Endothelial cell of umbilical vein (primary cell): ENCODE measurements at regions of chr18 and their contacts with region 1.

Region 1: GRCh38 chr18:79378542-79379250 is 17.0 kb upstream of the NFATC1 start:
- DNase-seq: peak; percentile 74
- H3K4me3 ChIP-seq: no peak overlapping the region
- H3K27ac ChIP-seq: no peak overlapping the region
- H3K4me1 ChIP-seq: no peaks in the 10 kb centered on the region
- H3K27me3 ChIP-seq: no peaks in the 10 kb centered on the region
- CTCF ChIP-seq: peak; percentile 99
- POLR2A ChIP-seq: no peak

Region 2: DNA sequence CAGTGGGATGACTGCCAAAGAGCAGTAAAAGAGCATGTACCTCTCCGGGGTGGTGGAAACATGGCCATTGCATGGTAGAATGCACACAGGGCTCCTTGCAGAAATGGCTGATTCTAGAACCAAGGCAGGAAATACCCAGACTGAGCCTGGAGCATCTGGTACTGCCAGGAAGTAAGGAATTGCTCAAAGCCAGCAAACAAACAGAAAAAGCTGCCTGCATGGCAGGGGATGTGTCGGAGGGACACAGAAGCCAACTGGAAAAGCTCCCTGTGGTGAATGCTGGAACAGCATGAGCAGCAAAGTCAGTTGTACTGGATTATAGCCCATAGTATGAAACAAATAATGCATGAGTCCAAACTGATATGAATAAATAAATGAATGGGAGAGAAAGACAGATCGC is 61.0 kb before region 1 on chr18:
- CTCF ChIA-PET with region 1: no interaction called
- POLR2A ChIA-PET with region 1: no interaction called
- dilution Hi-C with region 1: no loop called
- intact Hi-C with region 1: no loop called
- DNase-seq: no peak
- H3K4me3 ChIP-seq: no peak overlapping the region
- H3K27ac ChIP-seq: no peak overlapping the region
- H3K4me1 ChIP-seq: no peaks in the 10 kb centered on the region
- H3K27me3 ChIP-seq: no peaks in the 10 kb centered on the region
- CTCF ChIP-seq: no peak
- POLR2A ChIP-seq: no peak

Region 3: GRCh38 chr18:79393635-79394533 is 15.2 kb after region 1 on chr18:
- CTCF ChIA-PET with region 1: interaction called, 62 read pairs
- POLR2A ChIA-PET with region 1: no interaction called
- dilution Hi-C with region 1: no loop called
- intact Hi-C with region 1: no loop called
- DNase-seq: peak; percentile 94
- H3K4me3 ChIP-seq: peak overlapping the region; percentile 28 to 38 (median 35)
- H3K27ac ChIP-seq: peak overlapping the region; percentile 87
- H3K4me1 ChIP-seq: peaks cover 34% of the 10 kb centered on the region
- H3K27me3 ChIP-seq: peaks cover 0 to 6% of the 10 kb centered on the region in 2 experiments
- CTCF ChIP-seq: no peak
- POLR2A ChIP-seq: peak; percentile 54

Region 4: DNA sequence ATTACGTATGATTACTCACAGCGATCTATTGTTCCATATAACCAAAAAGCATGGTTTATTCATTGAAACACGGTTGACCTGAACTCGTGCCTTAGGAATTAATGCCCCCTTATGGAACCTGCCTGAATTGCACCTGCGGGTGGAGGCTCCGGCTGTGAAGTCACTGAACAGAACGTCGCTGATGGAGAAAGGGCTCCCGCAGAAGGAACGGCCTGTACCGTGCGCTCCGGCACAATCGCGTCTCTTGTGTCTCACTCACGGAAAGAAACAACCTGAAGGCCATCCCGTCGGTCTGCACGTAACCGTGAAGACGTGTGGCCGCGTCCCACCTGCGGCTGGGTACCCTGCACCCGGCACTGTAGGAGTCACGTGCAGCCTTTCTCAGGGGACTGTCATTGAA is 150.2 kb after region 1 on chr18:
- CTCF ChIA-PET with region 1: interaction called, 50 read pairs
- POLR2A ChIA-PET with region 1: no interaction called
- dilution Hi-C with region 1: no loop called
- intact Hi-C with region 1: loop called (anchors 1 kb)
- DNase-seq: peak; percentile 80
- H3K4me3 ChIP-seq: no peak overlapping the region
- H3K27ac ChIP-seq: no peak overlapping the region
- H3K4me1 ChIP-seq: peaks cover 7% of the 10 kb centered on the region
- H3K27me3 ChIP-seq: no peaks in the 10 kb centered on the region
- CTCF ChIP-seq: peak; percentile 82 to 86
- POLR2A ChIP-seq: no peak

Region 5: GRCh38 chr18:79679111-79679872 is 300.6 kb after region 1 on chr18 and contains the start of gene CTDP1:
- CTCF ChIA-PET with region 1: interaction called, 5 read pairs
- POLR2A ChIA-PET with region 1: no interaction called
- dilution Hi-C with region 1: no loop called
- intact Hi-C with region 1: loop called (anchors 1 kb)
- DNase-seq: peak; percentile 99
- H3K4me3 ChIP-seq: peak within 1 kb of the TSS; percentile 82 to 99 (median 83)
- H3K27ac ChIP-seq: peak within 1 kb of the TSS; percentile 73
- H3K4me1 ChIP-seq: peaks cover 16% of the 10 kb centered on the region
- H3K27me3 ChIP-seq: no peaks in the 10 kb centered on the region
- CTCF ChIP-seq: no peak
- POLR2A ChIP-seq: peak; percentile 25
- total RNA-seq, gene CTDP1: 23.5 and 27.6 TPM in 2 replicates

Region 6: DNA sequence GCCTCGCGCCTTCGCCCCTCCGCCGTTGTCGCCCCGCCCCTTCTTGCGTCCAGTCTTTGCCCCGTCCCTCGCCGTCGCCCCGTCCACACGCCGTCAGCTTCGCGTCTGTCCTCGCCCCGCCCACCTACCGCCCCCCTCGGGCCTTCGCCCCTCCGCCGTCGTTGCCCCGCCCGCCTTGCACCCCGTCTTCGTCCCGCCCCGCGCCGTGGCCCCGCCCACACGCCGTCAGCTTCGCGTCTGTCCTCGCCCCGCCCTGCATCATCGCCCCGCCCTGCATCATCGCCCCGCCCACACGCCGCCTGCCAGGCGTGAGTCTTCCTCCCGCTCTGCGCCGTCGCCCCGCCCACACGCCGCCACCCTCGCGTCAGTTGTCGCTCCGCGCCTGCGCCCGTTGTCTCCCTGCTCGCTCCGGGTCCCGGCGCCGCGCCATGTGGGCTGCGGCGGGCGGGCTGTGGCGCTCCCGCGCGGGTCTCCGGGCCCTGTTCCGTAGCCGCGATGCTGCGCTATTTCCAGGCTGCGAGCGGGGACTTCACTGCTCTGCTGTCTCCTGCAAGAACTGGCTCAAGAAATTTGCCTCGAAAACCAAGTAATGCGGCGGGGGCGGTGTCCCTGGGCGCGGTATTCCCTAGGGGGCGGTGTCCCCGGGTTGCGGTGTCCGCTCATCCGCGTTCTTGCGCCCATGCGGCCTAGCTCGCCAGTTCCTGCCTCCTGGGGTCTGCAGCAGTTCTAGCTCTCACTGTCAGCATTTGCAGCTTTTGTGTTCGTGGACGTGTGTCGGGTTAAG is 655.6 kb after region 1 on chr18 and contains the start of gene RBFA:
- CTCF ChIA-PET with region 1: no interaction called
- POLR2A ChIA-PET with region 1: no interaction called
- dilution Hi-C with region 1: no loop called
- intact Hi-C with region 1: loop called (anchors 10 kb)
- DNase-seq: peak; percentile 99
- H3K4me3 ChIP-seq: peak within 1 kb of the TSS; percentile 94 to 97 (median 96)
- H3K27ac ChIP-seq: peak within 1 kb of the TSS; percentile 39
- H3K4me1 ChIP-seq: peaks cover 9% of the 10 kb centered on the region
- H3K27me3 ChIP-seq: no peaks in the 10 kb centered on the region
- CTCF ChIP-seq: peak; percentile 32 to 49
- POLR2A ChIP-seq: peak; percentile 85
- total RNA-seq, gene RBFA: 30.5 and 34.8 TPM in 2 replicates